T-cell (primary cell): ENCODE measurements at regions of chr3 and their contacts with region 1.

Region 1: GRCh38 chr3:107555359-107555758 is 32.6 kb downstream of the BBX start:
- DNase-seq: no peak
- ATAC-seq: no peak
- H3K4me3 ChIP-seq: no peak overlapping the region
- H3K4me3 Mint-ChIP-seq: no peak overlapping the region
- H3K27ac ChIP-seq: no peak overlapping the region
- H3K27ac Mint-ChIP-seq: no peak overlapping the region
- H3K4me1 ChIP-seq: no peaks in the 10 kb centered on the region
- H3K4me1 Mint-ChIP-seq: peaks cover 56 to 67% (median 60%) of the 10 kb centered on the region in 3 donors
- H3K27me3 ChIP-seq: no peaks in the 10 kb centered on the region
- H3K27me3 Mint-ChIP-seq: no peaks in the 10 kb centered on the region

Region 2: DNA sequence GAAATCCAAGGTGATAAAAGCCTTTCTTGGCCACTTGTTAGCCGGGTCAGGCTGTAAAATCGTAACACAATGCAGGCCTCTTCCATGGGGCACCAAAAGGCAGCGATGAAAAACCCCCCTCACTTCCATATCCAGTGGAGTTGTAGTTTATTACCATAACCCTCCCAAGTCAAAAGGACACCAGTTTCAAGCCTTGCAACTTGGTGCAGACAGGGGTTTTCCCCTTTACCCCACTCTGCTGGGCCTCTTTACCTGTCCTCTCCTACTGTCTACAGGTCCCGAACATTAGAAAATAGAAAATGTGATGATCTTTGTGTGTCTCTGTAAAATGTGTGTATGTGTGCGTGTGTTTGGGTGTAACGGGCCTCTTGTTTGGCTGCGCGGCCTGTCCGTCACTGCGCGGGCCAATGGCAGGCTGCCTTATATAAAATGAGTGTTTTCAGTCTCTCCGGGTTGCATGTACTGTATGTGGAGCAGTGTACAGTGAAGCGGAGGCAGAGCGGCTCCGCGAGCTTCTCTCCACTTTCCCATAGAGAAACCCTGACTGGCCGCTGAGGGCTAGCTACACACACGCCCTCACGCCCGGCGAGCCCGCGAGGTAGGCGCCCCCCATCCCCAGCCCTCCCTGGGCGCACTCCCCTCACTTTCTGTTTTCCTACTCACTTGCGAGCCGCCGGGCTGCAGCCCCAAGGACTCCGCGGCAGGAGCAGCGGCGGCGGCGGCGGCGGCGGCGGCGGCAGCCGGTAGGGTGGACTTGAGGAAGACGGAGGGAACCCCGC is 32.7 kb before region 1 on chr3 and contains the start of gene BBX:
- CTCF ChIA-PET with region 1: no interaction called
- POLR2A ChIA-PET with region 1: interaction called in 1 of 2 experiments, 12 read pairs
- DNase-seq: peak; percentile 74 to 99 (median 89)
- ATAC-seq: peak; percentile 88 to 91 (median 90)
- H3K4me3 ChIP-seq: peak within 1 kb of the TSS; percentile 84 to 92
- H3K4me3 Mint-ChIP-seq: peak within 1 kb of the TSS; percentile 96 to 99 (median 98)
- H3K27ac ChIP-seq: peak within 1 kb of the TSS; percentile 78
- H3K27ac Mint-ChIP-seq: peak within 1 kb of the TSS; percentile 95 to 97
- H3K4me1 ChIP-seq: peaks cover 4 to 17% of the 10 kb centered on the region in 2 experiments
- H3K4me1 Mint-ChIP-seq: peaks cover 29 to 31% (median 30%) of the 10 kb centered on the region in 3 donors
- H3K27me3 ChIP-seq: no peaks in the 10 kb centered on the region
- H3K27me3 Mint-ChIP-seq: no peaks in the 10 kb centered on the region
- total RNA-seq, gene BBX: 67.7 to 89.8 (median 82.0) TPM